Activated CD8-positive, alpha-beta T cell treated with anti-CD3 and anti-CD28 coated beads, Interleukin-2, amount 10 ng/mL, durations not matched to agents 7 days and 5 days (primary cell): ENCODE measurements at regions of chr5 and their contacts with region 1.

Region 1: GRCh38 chr5:119435436-119436132 is 16.7 kb upstream of the HSD17B4 start:
- DNase-seq: peak; percentile 80
- ATAC-seq: peak; percentile 80
- H3K4me3 Mint-ChIP-seq: no peak overlapping the region
- H3K27ac Mint-ChIP-seq: no peak overlapping the region
- H3K4me1 Mint-ChIP-seq: peaks cover 26% of the 10 kb centered on the region
- H3K27me3 Mint-ChIP-seq: peaks cover 17% of the 10 kb centered on the region

Region 2: DNA sequence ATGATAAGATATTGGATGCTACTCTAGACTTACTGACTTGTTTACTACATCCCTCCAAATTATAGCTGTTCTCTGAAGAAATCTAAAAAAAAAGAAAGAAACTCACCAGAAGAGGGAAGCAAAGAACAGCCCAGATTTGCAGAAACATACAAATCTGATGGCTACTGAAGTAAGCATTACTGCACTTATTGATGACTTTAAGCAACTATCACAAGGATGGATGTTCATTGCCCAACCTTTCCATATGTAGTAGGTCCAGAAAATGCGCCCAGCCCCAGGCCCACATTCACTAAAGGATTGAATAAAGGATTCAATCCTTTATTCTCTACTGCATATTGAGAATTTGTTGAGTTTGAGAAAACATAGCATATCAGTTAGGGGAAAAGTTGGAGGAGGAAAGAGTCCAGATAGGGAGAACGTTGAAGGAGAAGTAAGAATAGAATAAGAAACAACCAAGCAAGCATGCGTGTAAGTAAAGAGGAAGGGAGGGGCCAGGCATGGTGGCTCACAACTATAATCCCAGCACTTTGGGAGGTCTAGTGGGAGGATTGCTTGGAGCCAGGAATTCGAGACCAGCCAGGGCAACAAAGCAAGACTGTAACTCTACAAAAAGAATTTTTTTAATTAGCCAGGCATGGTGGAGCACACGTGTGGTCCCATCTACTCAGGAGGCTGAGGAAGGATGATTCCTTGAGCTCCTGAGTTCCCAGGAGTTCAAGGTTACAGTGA is 413.4 kb before region 1 on chr5:
- CTCF ChIA-PET with region 1: interaction called, 16 read pairs
- POLR2A ChIA-PET with region 1: no interaction called
- DNase-seq: no peak
- ATAC-seq: peak; percentile 68
- H3K4me3 Mint-ChIP-seq: no peak overlapping the region
- H3K27ac Mint-ChIP-seq: no peak overlapping the region
- H3K4me1 Mint-ChIP-seq: peaks cover 3% of the 10 kb centered on the region
- H3K27me3 Mint-ChIP-seq: no peaks in the 10 kb centered on the region

Region 3: DNA sequence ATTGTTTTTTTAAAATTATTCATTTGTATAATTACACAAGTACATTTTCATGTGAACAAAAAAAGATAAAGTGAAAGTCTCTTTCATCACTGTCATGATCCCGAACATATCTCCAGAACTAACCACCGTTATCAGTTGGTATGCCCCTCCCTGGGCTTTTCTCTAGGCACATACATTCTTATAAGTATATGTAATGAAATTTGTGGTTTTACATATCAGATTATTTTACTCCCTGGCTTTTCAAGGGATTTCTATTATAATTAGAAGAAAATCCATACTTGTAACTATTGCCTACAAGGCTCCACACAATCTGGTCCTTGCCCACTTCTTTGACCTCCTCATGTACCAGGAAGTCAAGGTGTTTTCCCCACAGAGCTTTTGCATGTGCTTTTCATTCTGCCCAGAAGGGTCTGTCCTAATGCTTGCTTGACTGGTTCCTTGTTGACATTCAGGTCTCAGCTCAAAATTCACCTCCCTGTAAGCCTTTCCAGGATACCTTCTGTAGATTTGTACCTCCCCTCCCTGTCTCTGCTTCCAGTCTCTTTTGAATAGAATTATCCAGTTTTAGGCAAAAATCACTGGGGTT is 17.0 kb before region 1 on chr5:
- CTCF ChIA-PET with region 1: interaction called, 34 read pairs
- POLR2A ChIA-PET with region 1: interaction called, 4 read pairs
- DNase-seq: no peak
- ATAC-seq: no peak
- H3K4me3 Mint-ChIP-seq: no peak overlapping the region
- H3K27ac Mint-ChIP-seq: no peak overlapping the region
- H3K4me1 Mint-ChIP-seq: peaks cover 15% of the 10 kb centered on the region
- H3K27me3 Mint-ChIP-seq: no peaks in the 10 kb centered on the region

Region 4: DNA sequence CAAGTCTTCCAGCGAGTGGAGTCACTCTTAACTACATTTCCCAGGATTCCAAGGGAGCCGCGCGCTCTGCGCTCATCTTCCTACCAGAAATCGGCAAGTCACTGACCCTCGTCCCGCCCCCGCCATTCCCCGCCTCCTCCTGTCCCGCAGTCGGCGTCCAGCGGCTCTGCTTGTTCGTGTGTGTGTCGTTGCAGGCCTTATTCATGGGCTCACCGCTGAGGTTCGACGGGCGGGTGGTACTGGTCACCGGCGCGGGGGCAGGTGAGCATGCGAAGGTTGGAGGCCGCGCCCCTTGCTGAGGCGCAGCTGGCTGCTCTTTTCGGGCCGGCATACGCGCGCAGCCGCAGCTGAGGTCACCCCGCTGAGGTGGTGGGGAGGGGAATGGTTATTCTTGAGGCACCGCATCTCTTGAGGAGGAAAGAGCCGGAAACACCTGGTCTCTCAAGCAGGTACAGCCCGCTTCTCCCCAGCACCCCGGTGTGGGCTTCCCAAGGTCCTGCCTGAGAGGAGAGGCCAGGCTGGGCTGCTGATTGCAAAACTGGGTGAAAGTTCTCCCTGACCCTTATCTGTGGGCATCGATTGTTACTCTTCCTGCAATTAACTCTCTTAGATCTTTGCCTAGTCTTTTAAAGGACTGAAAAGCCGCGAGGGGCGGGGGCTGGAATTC is 16.9 kb after region 1 on chr5 and contains the start of gene HSD17B4:
- CTCF ChIA-PET with region 1: interaction called, 11 read pairs
- POLR2A ChIA-PET with region 1: no interaction called
- DNase-seq: peak; percentile 86
- ATAC-seq: peak; percentile 95
- H3K4me3 Mint-ChIP-seq: peak within 1 kb of the TSS; percentile 95
- H3K27ac Mint-ChIP-seq: peak within 1 kb of the TSS; percentile 82
- H3K4me1 Mint-ChIP-seq: peaks cover 19% of the 10 kb centered on the region
- H3K27me3 Mint-ChIP-seq: peaks cover 8% of the 10 kb centered on the region
- total RNA-seq, gene HSD17B4: 68.9 to 78.9 TPM